Endothelial cell of umbilical vein (primary cell): ENCODE measurements at regions of chr5 and their contacts with region 1.

Region 1: DNA sequence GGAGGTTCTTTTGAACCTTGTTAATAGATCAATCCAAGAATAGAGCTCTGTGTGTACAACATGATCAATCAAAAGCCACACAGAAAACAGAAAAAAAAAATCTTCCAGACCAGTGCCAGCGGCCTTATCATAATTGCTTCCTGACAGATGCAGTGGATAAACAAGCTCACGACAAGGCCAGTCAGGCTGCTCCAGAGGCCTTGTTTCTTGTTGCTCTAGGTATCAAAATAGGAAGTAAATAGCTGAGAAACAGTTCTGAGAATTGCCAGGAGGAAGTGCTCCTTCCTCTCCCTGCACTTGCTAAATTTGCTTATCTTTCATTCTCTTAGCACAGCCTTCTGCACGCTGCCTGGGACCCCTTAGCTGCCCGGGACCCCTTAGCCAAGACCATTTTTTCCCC is 199.0 kb upstream of the TARS1 start:
- DNase-seq: peak; percentile 93
- H3K4me3 ChIP-seq: no peak overlapping the region
- H3K27ac ChIP-seq: no peak overlapping the region
- H3K4me1 ChIP-seq: peaks cover 13% of the 10 kb centered on the region
- H3K27me3 ChIP-seq: no peaks in the 10 kb centered on the region
- CTCF ChIP-seq: no peak
- POLR2A ChIP-seq: peak; percentile 32

Region 2: DNA sequence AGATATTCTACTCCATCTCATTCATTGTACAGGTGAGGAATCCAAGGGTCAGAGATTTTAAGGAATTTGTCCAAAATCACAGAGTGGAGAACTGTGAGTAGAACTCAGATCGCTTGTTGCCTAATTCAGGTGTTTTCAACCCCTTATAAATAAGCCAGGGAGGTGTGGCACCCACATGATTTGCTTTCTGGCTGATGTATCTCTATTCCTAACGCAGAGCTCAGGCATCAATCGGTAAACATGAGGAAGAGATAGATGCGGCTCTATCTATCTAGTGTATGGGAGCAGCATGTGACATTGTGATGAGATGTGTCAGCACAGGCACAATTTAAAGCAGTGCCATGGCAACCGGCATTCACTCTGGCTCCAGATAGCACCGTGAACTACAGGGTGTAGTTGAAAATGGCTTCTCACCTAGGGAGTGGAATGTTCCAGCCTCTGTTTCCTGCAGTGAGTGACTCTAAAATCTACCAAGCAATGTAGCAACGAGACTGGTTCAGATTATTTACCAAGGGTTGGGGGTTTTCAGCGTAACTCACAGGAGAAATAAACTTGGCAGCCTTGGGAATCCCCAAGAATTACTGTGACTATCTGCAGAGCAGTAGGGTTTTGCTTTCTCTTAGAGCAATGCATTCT is 709.8 kb before region 1 on chr5:
- CTCF ChIA-PET with region 1: no interaction called
- POLR2A ChIA-PET with region 1: no interaction called
- dilution Hi-C with region 1: no loop called
- intact Hi-C with region 1: no loop called
- DNase-seq: no peak
- H3K4me3 ChIP-seq: no peak overlapping the region
- H3K27ac ChIP-seq: no peak overlapping the region
- H3K4me1 ChIP-seq: no peaks in the 10 kb centered on the region
- H3K27me3 ChIP-seq: no peaks in the 10 kb centered on the region
- CTCF ChIP-seq: no peak
- POLR2A ChIP-seq: no peak

Region 3: GRCh38 chr5:33364406-33364805 is 122.6 kb after region 1 on chr5:
- CTCF ChIA-PET with region 1: no interaction called
- POLR2A ChIA-PET with region 1: no interaction called
- dilution Hi-C with region 1: no loop called
- intact Hi-C with region 1: loop called (anchors 2 kb)
- DNase-seq: peak; percentile 88
- H3K4me3 ChIP-seq: peak overlapping the region in 1 of 3 experiments; percentile 5
- H3K27ac ChIP-seq: peak overlapping the region; percentile 42
- H3K4me1 ChIP-seq: peaks cover 36% of the 10 kb centered on the region
- H3K27me3 ChIP-seq: no peaks in the 10 kb centered on the region
- CTCF ChIP-seq: no peak
- POLR2A ChIP-seq: no peak